B cell (primary cell): ENCODE measurements at regions of chr5 and their contacts with region 1.

Region 1: DNA sequence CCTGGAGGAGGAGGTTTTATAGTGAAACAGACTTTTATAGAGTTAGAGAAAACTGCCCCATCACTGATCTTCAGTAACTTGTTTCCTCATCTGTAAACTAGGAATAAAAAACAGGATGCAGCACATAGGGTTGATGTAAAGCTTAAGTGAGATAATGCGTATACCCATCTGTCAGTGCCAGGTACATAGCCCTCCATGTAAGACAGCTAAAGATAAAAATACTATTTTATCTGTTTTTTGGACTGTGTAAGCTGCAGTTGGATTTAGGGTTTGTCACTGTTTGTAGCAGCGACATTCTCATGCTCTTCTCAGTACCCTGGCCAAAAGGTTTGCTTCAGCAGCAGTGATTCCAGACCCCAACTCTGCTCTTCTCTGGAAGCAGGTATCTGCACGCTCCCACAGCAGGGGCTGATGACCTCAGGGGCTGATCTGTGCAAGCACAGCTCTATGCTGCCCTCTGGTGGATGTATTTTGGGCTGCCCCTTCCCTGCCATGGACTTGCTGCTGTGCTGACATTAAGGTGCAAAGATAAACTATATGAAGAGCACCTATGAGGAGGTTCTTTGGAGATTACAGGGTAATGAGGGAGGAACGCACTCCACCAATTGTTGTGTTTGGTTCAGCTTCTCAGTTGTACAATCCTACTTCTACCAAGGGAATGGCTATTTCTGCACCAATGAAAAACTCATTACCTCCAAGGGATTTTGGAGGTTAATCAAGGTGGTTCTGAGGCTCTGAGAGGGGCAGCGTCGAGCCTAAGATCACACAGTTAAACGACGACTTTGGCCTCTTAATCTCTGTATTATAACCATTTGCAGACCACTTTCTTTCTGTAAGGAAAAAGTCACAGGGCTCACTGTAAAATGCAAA is 13.1 kb downstream of the HMHB1 start:
- DNase-seq: peak; percentile 85
- ATAC-seq: peak; percentile 96
- H3K4me3 ChIP-seq: no peak overlapping the region
- H3K4me3 Mint-ChIP-seq: no peak overlapping the region
- H3K27ac ChIP-seq: no peak overlapping the region
- H3K27ac Mint-ChIP-seq: no peak overlapping the region
- H3K4me1 ChIP-seq: peaks cover 3 to 5% of the 10 kb centered on the region in 2 donors
- H3K4me1 Mint-ChIP-seq: peaks cover 8% of the 10 kb centered on the region
- H3K27me3 ChIP-seq: no peaks in the 10 kb centered on the region
- H3K27me3 Mint-ChIP-seq: no peaks in the 10 kb centered on the region
- CTCF ChIP-seq: peak; percentile 95

Region 2: GRCh38 chr5:142915813-142916424 is 909.2 kb before region 1 on chr5:
- CTCF ChIA-PET with region 1: interaction called, 123 read pairs
- POLR2A ChIA-PET with region 1: no interaction called
- intact Hi-C with region 1: no loop called
- DNase-seq: peak; percentile 52
- ATAC-seq: peak; percentile 63
- H3K4me3 ChIP-seq: no peak overlapping the region
- H3K4me3 Mint-ChIP-seq: no peak overlapping the region
- H3K27ac ChIP-seq: no peak overlapping the region
- H3K27ac Mint-ChIP-seq: no peak overlapping the region
- H3K4me1 ChIP-seq: peaks cover 0 to 6% of the 10 kb centered on the region in 2 donors
- H3K4me1 Mint-ChIP-seq: peaks cover 7% of the 10 kb centered on the region
- H3K27me3 ChIP-seq: no peaks in the 10 kb centered on the region
- H3K27me3 Mint-ChIP-seq: no peaks in the 10 kb centered on the region
- CTCF ChIP-seq: peak; percentile 36

Region 3: DNA sequence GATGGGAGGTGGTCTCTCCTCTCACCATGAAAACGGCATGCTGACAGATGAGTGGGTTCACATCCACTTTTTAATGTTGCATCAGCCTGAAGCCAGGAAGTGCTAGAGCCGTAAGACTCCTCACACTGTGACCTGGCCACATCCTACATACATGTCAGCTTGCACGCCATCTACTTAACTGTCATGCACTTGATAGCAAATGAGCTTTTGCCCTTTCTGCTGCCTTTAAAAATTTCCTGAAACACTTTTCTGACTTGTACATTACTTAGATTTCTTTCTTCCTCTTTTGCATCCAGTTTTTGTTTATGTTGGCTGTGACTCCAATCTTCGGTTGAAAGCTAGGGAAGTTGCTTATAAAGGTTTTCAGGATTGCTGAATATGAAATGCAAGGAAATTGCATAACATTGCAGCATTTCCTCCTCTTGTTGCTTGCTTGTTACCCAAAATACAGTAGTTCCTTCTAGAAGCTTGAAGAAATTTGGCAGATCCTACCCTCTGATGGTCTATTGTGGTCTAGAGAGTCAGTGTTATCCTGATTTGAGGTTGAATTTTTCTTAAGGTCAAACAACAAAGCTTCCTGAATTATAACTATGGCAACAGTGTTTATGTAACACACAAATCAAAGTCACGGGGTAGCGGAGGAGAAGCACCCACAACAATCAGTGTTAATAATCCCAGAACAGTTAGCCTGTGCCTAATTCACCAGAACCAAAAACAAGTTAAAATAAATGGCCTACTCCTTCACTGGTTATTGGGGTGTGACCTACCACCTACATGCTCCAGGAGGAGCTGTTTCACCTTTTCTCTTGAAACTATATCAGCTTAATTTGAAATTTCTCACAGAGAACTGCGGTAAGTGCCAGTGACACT is 822.4 kb before region 1 on chr5:
- CTCF ChIA-PET with region 1: interaction called, 55 read pairs
- POLR2A ChIA-PET with region 1: interaction called, 3 read pairs
- intact Hi-C with region 1: loop called (anchors 1 kb)
- DNase-seq: peak; percentile 76
- ATAC-seq: peak; percentile 72
- H3K4me3 ChIP-seq: peak overlapping the region in 1 of 5 experiments; percentile 40
- H3K4me3 Mint-ChIP-seq: peak overlapping the region; percentile 54
- H3K27ac ChIP-seq: peak overlapping the region; percentile 81 to 94
- H3K27ac Mint-ChIP-seq: peak overlapping the region; percentile 92
- H3K4me1 ChIP-seq: peaks cover 59 to 62% of the 10 kb centered on the region in 2 donors
- H3K4me1 Mint-ChIP-seq: peaks cover 86% of the 10 kb centered on the region
- H3K27me3 ChIP-seq: no peaks in the 10 kb centered on the region
- H3K27me3 Mint-ChIP-seq: no peaks in the 10 kb centered on the region
- CTCF ChIP-seq: peak; percentile 74

Region 4: GRCh38 chr5:143195491-143195890 is 629.6 kb before region 1 on chr5:
- CTCF ChIA-PET with region 1: interaction called, 3 read pairs
- POLR2A ChIA-PET with region 1: no interaction called
- intact Hi-C with region 1: loop called (anchors 10 kb)
- DNase-seq: no peak
- ATAC-seq: no peak
- H3K4me3 ChIP-seq: no peak overlapping the region
- H3K4me3 Mint-ChIP-seq: no peak overlapping the region
- H3K27ac ChIP-seq: no peak overlapping the region
- H3K27ac Mint-ChIP-seq: no peak overlapping the region
- H3K4me1 ChIP-seq: no peaks in the 10 kb centered on the region
- H3K4me1 Mint-ChIP-seq: no peaks in the 10 kb centered on the region
- H3K27me3 ChIP-seq: no peaks in the 10 kb centered on the region
- H3K27me3 Mint-ChIP-seq: no peaks in the 10 kb centered on the region
- CTCF ChIP-seq: no peak

Region 5: GRCh38 chr5:143812085-143812705 is 12.9 kb before region 1 on chr5 and contains the start of gene HMHB1:
- CTCF ChIA-PET with region 1: interaction called, 23 read pairs
- POLR2A ChIA-PET with region 1: no interaction called
- intact Hi-C with region 1: no loop called
- DNase-seq: no peak
- ATAC-seq: no peak
- H3K4me3 ChIP-seq: peak within 1 kb of the TSS in 4 of 5 experiments; percentile 12 to 46 (median 20)
- H3K4me3 Mint-ChIP-seq: peak within 1 kb of the TSS; percentile 77
- H3K27ac ChIP-seq: no peak within 1 kb of the TSS
- H3K27ac Mint-ChIP-seq: no peak within 1 kb of the TSS
- H3K4me1 ChIP-seq: peaks cover 11% of the 10 kb centered on the region in 2 donors
- H3K4me1 Mint-ChIP-seq: peaks cover 21% of the 10 kb centered on the region
- H3K27me3 ChIP-seq: peaks cover 0 to 4% (median 0%) of the 10 kb centered on the region in 4 experiments
- H3K27me3 Mint-ChIP-seq: no peaks in the 10 kb centered on the region
- CTCF ChIP-seq: no peak
- total RNA-seq, gene HMHB1: not detected in 2 replicates

Region 6: GRCh38 chr5:144191998-144192397 is 366.9 kb after region 1 on chr5:
- CTCF ChIA-PET with region 1: interaction called, 46 read pairs
- POLR2A ChIA-PET with region 1: no interaction called
- intact Hi-C with region 1: loop called (anchors 1 kb)
- DNase-seq: peak; percentile 86
- ATAC-seq: peak; percentile 76
- H3K4me3 ChIP-seq: peak overlapping the region in 2 of 5 experiments; percentile 8 to 19
- H3K4me3 Mint-ChIP-seq: no peak overlapping the region
- H3K27ac ChIP-seq: peak overlapping the region; percentile 54 to 70
- H3K27ac Mint-ChIP-seq: no peak overlapping the region
- H3K4me1 ChIP-seq: peaks cover 46% of the 10 kb centered on the region in 2 donors
- H3K4me1 Mint-ChIP-seq: peaks cover 40% of the 10 kb centered on the region
- H3K27me3 ChIP-seq: no peaks in the 10 kb centered on the region
- H3K27me3 Mint-ChIP-seq: no peaks in the 10 kb centered on the region
- CTCF ChIP-seq: peak; percentile 84